ENCODE measurements at regions of chr1 and their contacts with region 1.

Region 1: GRCh38 chr1:77978969-77979876 is at the start of gene FUBP1:
- DNase-seq: peak; percentile 97

Region 2: GRCh38 chr1:77900687-77901293 is 78.4 kb before region 1 on chr1:
- CTCF ChIA-PET with region 1: no interaction called
- POLR2A ChIA-PET with region 1: no interaction called
- DNase-seq: peak; percentile 67

Region 3: DNA sequence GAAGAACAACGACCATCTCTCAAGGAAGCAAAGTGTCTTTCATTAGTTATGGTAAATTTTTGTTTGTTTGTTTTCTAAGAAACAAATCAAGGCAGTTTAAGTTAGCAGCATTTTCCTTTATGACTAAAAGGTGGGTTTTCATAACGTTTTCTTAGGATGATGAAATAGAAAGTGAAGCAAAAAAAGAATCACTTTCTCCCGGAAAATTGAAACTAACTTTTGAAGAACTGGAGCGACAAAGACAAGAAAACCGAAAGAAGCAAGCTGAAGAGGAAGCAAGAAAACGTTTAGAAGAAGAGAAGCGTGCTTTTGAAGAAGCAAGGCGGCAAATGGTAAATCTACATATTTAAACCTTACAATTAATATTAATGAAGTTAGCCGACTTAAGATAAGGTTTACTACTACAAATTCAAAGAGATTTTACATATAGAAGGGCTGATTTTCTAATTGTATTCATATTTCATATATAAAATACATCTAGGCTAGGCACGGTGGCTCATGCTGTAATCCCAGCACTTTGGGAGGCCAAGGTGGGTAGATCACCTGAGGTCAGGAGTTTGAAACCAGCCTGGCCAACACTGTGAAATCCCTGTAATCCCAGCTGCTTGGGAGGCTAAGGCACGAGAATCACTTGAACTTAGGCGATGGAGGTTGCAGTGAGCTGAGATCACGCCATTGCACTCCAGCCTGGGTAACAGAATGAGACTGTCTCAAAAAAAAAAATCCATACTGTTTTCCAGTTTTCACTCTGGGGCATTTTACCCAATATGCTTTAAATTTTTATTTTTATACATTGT is 52.5 kb before region 1 on chr1:
- CTCF ChIA-PET with region 1: no interaction called
- POLR2A ChIA-PET with region 1: no interaction called
- DNase-seq: no peak

Region 4: GRCh38 chr1:77994117-77994705 is 15.0 kb after region 1 on chr1:
- CTCF ChIA-PET with region 1: interaction called, 3 read pairs
- POLR2A ChIA-PET with region 1: interaction called, 16 read pairs
- DNase-seq: no peak

Region 5: DNA sequence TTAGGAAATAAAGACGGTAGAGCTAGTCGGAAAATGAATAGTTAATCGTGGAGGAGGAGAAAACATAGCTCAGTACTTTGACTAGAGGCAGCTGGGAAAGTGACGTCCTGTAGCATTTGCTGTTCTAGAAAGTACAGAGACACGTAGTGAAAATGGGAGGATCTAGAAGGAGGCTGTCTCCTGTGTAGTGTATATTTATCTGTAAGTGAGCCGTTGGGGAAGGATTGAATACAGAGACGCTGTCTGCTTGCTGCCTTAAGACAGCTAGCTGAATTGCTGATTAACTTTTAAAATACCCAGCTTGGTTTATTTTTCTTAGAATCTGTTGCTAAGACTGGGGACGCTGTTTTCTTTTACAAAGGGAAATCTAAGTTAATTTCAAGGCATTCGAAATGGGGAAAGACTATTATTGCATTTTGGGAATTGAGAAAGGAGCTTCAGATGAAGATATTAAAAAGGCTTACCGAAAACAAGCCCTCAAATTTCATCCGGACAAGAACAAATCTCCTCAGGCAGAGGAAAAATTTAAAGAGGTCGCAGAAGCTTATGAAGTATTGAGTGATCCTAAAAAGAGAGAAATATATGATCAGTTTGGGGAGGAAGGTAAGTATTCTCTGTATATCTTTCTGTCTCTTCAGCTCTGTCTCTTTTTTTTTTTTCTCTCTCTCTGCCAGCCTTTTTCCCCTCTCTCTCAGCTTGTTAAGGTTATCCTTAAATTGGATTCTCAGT is 25.7 kb after region 1 on chr1 and contains the start of gene DNAJB4:
- CTCF ChIA-PET with region 1: interaction called, 10 read pairs
- POLR2A ChIA-PET with region 1: interaction called, 83 read pairs
- DNase-seq: peak; percentile 83

Region 6: DNA sequence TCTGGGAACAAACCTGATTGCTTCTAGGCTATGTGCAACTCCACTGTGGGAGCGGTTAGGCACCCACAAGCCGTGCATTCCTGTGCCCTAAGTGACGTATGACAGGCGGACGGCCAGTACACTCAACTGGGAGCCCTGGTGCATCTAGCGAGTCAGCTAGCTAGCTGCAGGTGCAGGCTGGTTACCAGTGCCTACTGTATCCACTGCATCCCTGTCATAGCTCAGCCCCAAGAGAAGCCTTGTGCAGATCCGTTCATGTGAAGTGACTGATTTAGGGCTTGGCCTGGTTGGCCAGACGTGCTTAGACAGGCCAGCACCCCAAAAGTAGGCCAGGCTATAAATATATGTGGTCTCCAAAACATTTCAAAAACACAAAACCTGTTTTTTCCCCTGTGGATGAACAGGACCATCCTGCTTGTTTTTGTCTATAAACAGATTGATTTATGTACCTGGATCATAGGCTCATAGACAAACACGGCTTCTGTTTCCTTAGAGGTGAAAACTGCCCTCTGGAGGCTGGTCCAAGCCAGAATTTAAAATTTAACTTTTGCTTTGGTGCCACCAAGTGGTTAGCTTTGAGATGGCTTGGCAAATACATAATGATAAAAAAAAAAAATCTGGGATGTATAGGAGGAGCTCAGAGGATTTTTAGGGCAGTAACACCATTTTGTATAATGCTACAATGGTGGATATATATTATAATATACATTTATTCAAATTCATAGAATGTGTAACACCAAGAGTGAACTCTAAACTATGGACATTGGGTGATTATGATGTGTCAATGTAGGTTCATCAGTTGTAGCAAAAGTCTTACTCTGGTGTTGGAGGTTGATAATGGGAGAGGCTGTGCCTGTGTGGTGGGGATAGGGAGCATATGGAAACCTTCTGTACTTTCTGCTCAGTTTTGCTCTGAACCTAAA is 135.1 kb after region 1 on chr1:
- CTCF ChIA-PET with region 1: interaction called, 4 read pairs
- POLR2A ChIA-PET with region 1: interaction called, 11 read pairs
- DNase-seq: peak; percentile 83

Measured in HEK293T (cell line).